ENCODE measurements at regions of chr3 and their contacts with region 1.

Region 1: DNA sequence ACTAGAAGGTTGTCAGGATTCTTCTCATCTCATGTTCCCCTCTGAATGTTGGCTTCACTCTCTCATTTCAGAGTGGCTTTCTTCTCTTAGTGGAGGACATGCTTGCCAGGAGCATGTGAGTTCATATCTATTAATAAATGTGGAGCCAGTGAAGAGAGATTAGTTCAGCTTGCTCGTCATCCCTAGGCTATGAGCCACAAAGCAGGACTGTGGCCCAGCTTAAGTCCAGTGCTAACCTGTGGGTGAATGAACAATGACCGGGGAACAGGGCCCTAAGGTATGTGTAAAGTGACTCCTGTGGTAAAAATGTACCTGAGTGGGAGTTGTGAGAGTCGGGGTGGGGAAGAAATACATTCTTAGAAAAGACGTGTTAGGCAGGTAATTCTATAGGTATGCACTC is 96.9 kb upstream of the TBL1XR1 start:
- DNase-seq: peak in 1 of 2 donors; percentile 86
- ATAC-seq: peak; percentile 93 to 98 (median 95)
- H3K4me3 ChIP-seq: no peak overlapping the region
- H3K27ac ChIP-seq: peak overlapping the region; percentile 35 to 95 (median 79)
- H3K4me1 ChIP-seq: peaks cover 3 to 33% (median 19%) of the 10 kb centered on the region in 9 donors
- H3K27me3 ChIP-seq: no peaks in the 10 kb centered on the region
- CTCF ChIP-seq: no peak

Region 2: DNA sequence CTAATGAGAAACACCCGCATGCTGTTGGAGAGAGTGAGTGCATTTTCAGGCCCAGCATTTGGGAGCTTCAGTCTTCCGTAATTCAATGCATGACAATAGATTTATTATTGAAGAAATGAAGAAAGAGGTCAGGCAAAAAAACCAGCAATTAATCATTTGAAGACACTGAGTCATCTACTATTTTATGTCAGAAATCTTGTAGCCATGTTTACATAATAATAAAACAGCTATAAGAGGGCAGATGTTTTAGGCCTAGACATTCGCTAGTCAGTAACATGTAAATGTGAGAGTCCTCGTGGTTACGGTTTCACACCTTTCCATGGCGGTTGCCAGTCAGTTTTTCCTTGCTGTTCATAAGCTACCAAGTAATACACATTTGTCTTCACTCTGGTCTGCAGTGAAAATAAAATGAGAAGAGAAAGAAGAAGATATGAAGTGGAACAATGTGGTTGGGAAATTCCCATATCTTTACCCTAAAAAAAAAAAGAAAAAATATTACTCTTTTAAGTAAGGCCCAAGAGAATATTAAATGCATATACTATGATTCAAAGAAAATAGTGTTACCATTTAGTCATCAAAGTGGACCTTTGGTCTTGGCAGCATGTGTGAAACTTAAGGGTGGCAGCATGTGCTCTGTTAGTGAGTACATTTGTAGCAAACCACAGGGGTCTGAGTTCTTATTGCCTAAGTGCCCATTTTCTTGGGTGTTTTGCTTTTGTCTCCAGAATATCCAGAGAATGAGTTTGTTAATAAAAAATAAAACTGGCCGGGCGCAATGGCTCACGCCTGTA is 43.5 kb after region 1 on chr3:
- intact Hi-C with region 1: loop called in 3 of 10 experiments (anchors 5 to 10 kb)
- DNase-seq: no peak
- ATAC-seq: no peak
- H3K4me3 ChIP-seq: no peak overlapping the region
- H3K27ac ChIP-seq: peak overlapping the region in 7 of 10 donors; percentile 7 to 92 (median 81)
- H3K4me1 ChIP-seq: peaks cover 4 to 89% (median 58%) of the 10 kb centered on the region in 9 donors
- H3K27me3 ChIP-seq: no peaks in the 10 kb centered on the region
- CTCF ChIP-seq: no peak

Region 3: DNA sequence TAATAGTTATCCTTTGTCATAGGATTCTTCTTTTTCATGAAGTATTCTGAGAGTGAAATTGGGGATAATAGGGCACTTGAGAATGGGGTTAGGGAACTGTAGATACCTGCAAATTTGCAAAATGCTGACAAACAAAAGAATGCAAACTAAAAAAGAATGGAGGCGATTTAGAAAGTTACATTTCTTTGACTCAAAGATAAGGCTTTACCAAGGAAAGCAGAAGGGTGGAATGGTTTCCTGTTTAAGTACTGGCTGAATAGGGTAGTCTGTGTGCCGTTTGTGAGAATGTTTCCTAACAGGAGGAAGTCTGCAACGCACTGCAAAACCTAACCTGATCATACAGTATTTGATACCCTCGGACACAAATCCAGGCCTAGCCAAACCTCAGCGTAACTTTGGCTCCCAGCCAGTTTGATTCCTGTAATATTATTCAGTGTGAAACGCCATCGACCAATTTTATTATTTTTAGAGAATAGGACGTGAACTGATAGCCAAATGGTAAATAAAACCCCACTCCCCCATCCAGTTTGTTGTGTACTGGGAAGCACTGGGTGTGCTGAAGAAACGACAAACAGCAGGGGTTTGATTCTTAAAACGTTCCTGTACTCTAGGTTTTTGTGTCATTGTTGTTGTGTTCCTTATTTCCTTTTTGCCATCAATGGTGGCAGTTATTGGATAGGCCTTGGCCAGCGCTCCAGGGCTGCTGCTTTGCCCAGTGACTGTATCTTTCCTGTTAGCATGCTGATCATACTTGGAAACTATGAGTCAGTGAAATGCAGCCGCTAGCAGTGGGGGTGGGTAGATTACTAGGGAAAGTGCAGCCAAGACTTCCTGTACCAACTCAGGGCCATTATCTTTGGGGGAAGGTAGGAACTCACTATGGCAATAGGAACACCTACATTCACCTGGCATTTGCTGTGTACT is 51.1 kb after region 1 on chr3:
- intact Hi-C with region 1: loop called in 3 of 10 experiments (anchors 5 to 10 kb)
- DNase-seq: peak; percentile 79 to 90
- ATAC-seq: peak; percentile 93 to 99 (median 98)
- H3K4me3 ChIP-seq: peak overlapping the region in 1 of 10 donors; percentile 5
- H3K27ac ChIP-seq: peak overlapping the region; percentile 86 to 96 (median 90)
- H3K4me1 ChIP-seq: peaks cover 14 to 70% (median 55%) of the 10 kb centered on the region in 9 donors
- H3K27me3 ChIP-seq: no peaks in the 10 kb centered on the region
- CTCF ChIP-seq: no peak